ENCODE measurements at regions of chr11 and their contacts with region 1.

Region 1: GRCh38 chr11:131867457-131868257 is 497.2 kb downstream of the NTM start:
- DNase-seq: peak; percentile 63 to 98 (median 82)

Region 2: GRCh38 chr11:131748151-131749050 is 119.3 kb before region 1 on chr11:
- intact Hi-C with region 1: loop called (anchors 10 kb)
- DNase-seq: peak; percentile 55 to 97 (median 78)

Region 3: DNA sequence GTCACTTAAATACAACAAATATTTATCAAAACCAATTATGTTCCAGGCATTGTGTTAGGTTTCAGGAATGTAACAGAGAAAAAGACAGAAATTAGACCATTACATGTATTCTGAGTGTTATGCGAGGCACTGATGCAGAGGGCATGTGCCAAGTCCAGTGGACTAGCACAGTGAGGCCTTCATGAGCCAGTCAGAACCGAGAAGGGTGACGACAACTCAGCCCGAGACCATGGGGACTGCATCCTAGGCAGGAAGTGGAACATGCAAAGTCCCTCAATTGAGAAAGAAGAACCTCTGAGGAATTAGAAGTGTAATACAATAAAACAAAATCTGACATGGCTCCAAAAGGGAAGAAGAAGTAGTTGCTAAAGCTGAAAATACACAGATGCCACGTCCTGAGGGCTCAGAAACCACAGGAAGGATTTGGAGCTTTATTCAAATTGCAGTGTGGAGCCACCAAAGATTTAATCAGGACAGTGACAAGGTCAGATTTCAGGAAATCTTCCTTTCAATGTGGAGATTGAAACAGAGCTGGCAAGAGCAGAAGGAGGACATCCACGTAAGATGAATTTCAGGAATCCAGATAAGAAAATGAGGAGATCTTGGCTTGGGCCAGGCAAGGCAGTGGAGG is 32.4 kb after region 1 on chr11:
- intact Hi-C with region 1: no loop called
- DNase-seq: peak in 2 of 10 donors; percentile 27 to 75

Region 4: DNA sequence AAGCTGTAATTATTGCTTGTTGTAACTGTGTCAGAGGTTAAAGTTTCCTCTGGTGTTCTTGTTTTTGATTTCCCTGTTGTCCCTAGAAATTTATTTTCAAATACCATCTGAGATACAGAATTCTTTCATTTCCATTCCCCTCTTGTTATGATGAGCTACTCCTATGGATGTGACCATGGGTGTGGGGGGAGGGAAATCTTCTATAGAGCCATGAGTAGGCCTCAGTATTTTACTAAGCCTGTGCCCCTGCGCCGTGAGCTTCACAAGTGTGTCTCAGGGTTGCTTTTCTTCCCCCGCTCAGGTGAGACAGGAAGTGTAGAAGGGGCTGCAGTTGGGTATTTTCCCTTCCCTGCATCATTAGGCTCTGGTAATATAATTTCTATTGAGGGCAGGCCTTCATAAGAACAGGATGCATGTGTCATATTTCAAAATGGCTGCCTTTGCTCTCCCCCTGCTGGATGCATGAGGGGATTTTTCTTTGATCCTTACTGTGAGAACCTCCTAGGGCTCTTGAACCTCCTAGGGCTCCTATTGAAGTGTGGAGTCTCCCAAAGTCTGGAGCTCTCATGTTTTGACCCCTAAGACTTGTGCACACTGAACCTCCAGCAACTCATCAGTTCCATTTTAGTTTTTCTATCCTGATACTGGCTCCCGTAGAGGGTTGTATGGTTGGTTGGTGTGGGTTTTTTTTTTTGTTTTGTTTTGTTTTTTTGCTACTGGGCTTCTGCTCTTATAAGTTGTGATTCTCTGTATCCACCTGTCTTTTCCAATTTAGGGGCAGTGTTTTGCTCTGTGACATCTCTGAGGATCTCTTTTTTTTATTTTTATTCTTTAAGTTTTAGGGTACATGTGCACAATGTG is 161.0 kb after region 1 on chr11:
- intact Hi-C with region 1: loop called (anchors 5 kb)
- DNase-seq: peak in 3 of 10 donors; percentile 40 to 48 (median 44)

Region 5: GRCh38 chr11:132126973-132127899 is 259.6 kb after region 1 on chr11:
- intact Hi-C with region 1: loop called (anchors 1 kb)
- DNase-seq: peak in 6 of 10 donors; percentile 35 to 85 (median 62)

Region 6: GRCh38 chr11:132245403-132246385 is 378.0 kb after region 1 on chr11:
- intact Hi-C with region 1: no loop called
- DNase-seq: peak in 4 of 10 donors; percentile 29 to 83 (median 76)

Measured in posterior cingulate gyrus (tissue), 11 donors.